Posterior vena cava (tissue), 2 donors: ENCODE measurements at regions of chr3 and their contacts with region 1.

Region 1: DNA sequence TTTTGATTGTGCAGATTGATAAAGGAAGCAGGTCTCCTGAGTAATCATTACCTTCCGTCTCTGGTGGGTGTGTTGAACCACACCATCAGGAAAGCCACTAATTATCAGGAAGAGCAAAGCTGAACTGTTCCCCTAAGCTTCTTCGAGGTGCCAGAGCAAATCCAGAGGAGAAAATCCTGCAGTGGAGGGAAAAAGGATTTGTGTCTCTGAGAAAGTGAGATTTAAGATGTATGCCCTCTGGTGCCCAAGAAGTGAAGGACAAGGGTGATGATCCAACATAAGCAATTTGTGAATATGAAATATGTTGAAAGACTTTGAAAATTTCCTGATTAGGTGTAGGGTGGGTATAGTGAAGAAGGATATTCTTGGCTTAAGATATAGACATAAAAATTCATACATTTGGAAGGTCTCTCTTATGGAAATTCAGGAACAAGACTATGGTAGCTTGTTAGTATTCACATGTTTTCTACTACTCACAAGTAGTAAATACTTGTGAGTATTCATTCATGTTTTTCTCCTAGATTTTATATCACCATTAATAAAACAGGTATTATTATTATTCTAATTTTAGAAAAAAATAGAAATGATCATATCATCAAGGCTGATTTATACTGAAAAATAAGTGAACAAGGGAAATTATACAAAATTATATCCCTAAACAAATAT is 34.8 kb downstream of the COMMD2 start:
- DNase-seq: no peak

Region 2: DNA sequence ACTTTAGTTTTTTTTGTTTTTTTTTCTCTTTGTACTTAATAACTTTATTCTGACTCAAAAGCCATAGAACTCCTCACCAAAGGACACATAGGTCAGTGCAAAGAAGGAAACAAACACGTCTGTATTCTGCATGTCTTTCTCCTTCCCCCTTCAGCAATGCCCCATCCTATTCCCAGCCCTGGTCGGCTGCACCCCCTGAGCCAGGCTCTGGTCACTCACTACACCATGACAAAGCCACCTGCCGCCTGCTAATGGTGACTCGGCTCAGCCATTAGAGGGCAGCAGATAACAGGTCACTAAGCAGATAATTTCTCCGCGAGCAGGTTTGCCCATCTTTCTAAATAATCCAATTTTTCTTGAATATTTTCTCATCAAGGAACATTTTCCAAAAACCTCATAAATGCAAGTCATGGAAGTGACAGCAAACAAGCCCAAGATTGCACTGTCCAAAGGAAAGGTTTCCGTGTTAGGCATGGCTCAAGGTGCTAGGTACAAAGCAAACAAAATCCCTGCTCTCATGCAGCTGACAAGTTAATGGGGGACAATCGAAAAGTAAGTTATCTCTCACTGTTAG is 205.2 kb before region 1 on chr3:
- intact Hi-C with region 1: loop called (anchors 5 to 10 kb)
- DNase-seq: peak; percentile 87

Region 3: DNA sequence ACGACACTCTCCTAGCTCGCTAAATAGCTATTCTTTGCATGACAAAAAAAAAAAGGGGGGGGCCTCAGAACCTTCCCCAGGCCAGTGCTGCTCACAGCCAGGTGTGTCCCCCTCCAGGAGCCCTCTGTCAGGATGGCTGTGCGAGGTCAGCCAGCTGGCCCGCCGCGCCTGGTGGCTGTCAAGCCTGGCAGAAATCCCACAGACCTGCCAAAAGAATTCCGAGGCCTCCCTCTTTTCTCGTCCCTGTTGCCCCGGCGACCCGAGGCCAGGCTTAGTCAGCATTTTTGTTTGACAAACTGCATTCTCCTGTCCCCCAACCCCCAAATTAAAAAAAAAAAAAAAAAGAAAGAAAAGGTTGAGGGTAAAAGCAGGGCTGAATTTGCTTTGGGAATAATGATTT is 181.1 kb before region 1 on chr3:
- intact Hi-C with region 1: loop called in 1 of 2 experiments (anchors 5 kb)
- DNase-seq: peak; percentile 84

Region 4: DNA sequence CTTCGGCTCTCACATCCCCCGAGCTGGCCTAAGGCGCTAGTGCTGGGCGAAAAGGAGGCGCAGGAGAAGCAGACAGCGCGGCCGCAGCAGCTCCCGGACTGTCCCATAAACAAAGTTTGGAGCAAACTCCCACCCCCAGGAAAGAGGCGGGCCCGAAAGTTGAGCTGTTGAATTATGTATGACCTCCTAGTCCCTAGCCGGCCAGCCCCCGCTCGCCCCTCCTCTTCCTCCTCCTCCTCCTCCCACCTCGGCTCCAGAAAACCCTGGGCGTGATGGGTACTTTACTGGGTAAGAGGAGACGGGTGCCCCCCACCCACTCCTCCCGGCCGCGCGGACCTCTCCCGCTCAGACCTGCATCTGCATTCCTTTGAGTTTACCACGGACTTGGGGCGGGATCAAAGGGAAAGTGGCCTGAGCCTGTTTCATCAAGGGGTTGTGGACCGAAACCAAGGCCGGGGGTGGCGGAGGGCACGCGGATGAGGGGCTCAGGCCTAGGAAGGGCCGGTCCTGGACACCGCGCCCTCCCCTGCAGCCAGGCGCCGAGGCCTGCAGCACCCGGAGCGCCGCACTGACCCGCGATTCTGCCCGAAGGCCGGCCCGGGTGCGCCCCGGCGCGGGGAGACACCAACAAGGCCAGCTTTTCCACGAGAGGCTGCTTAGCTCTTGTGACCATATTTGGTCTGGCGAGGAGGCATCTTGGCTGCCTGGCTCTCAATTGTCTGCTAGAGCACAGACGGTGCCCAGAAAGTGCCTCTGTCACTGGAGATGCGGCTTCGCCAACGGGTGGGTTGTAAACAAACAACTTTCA is 59.4 kb before region 1 on chr3 and contains the start of gene WWTR1:
- intact Hi-C with region 1: loop called in 1 of 2 experiments (anchors 10 kb)
- DNase-seq: peak; percentile 97
- total RNA-seq, gene WWTR1: 177 to 201 TPM

Region 5: GRCh38 chr3:149688112-149688757 is 29.3 kb before region 1 on chr3:
- intact Hi-C with region 1: no loop called
- DNase-seq: no peak